ENCODE measurements at regions of chr4 and their contacts with region 1.

Region 1: DNA sequence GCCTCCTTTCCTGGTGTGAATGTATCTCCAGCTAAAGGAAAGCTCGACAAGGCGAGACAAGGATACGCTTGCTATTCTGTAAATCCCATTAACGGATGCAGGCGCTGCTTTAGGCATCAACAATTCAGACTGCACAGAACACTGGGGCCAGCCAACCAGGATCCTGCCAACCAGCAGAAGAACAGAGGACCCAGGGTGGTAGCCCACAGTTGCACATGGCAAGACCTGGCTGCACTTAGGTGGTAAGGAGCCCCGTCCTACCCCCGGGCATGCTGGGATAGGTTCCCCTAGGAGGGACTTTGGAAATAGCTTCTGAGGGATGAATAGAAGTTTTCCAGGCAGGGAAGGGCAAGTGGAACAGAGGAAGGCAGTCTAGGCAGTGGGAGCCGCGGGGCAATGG is 20.7 kb downstream of the PSAPL1 start:
- DNase-seq: peak in 1 of 2 experiments; percentile 37
- H3K4me3 ChIP-seq: no peak overlapping the region
- H3K27ac ChIP-seq: no peak overlapping the region
- H3K4me1 ChIP-seq: peaks cover 2 to 15% (median 12%) of the 10 kb centered on the region in 4 experiments; a peak in 4 of 7 replicates
- H3K27me3 ChIP-seq: peaks cover 37 to 71% (median 62%) of the 10 kb centered on the region in 4 experiments
- CTCF ChIP-seq: no peak
- EP300 ChIP-seq: no peak
- POLR2A ChIP-seq: no peak
- RAD21 ChIP-seq: no peak

Region 2: DNA sequence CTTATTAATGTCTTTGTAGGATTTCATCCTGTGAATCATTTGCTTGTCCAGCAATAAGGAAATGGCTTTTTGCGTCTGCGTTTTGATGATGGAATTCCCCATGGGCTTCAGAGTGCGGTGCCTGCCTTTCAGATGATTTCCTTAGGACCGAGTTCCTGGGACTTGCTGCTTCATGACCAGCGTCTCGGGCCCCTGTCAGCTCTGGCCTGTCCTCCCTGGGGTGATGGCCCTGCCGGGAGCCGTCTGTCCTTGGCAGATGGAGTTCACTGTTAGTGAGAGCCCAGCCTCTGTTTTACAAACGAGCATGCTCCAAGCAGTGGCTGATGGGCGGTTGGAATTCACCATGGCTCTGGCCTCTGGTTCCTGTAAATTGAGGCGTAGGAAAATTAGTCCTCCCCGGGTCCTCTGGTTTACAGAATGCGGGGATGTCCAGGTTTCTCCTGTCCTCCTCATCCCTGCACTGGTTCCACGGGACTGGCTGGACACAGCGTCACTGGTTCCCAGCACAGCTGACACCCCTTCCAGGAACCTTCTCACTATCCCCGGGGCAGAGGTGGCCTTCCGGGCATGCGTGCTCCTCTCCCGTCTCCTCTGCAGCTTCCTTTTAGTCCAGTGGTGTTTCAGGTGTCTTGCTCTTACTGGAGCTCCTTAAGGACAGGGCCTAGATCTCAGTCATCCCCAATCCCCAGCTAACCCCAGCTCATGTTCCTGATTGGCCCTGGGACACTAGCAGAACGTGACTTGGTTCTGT is 469.6 kb before region 1 on chr4:
- CTCF ChIA-PET with region 1: no interaction called
- POLR2A ChIA-PET with region 1: no interaction called
- DNase-seq: no peak
- H3K4me3 ChIP-seq: no peak overlapping the region
- H3K27ac ChIP-seq: peak overlapping the region; percentile 57
- H3K4me1 ChIP-seq: peaks cover 16 to 41% (median 26%) of the 10 kb centered on the region in 4 experiments
- H3K27me3 ChIP-seq: no peaks in the 10 kb centered on the region
- CTCF ChIP-seq: no peak
- EP300 ChIP-seq: no peak
- POLR2A ChIP-seq: no peak
- RAD21 ChIP-seq: no peak

Region 3: DNA sequence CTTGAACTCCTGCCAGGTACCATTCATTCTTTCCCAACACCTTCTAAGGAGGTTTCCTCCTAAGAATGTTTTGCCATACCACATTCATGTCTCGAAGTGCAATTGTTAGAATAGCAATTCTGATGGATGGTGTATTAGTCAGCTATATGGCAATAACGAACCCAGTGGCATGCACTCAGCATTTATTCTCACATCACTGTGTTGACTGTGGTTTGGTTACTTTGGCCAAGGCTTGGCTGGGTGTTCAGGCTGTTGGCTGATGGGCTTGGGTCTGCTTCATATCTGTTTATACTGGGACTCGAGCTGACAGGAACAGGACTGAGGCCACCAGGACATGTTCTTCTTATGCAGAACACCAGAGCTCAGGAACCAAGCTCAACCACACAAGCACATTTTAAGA is 11.0 kb before region 1 on chr4:
- CTCF ChIA-PET with region 1: interaction called, 14 read pairs
- POLR2A ChIA-PET with region 1: no interaction called
- DNase-seq: no peak
- H3K4me3 ChIP-seq: no peak overlapping the region
- H3K27ac ChIP-seq: no peak overlapping the region
- H3K4me1 ChIP-seq: no peaks in the 10 kb centered on the region
- H3K27me3 ChIP-seq: peaks cover 0 to 3% (median under 1%) of the 10 kb centered on the region in 4 experiments; a peak in 2 of 7 replicates
- CTCF ChIP-seq: no peak
- EP300 ChIP-seq: no peak
- POLR2A ChIP-seq: no peak
- RAD21 ChIP-seq: no peak

Region 4: DNA sequence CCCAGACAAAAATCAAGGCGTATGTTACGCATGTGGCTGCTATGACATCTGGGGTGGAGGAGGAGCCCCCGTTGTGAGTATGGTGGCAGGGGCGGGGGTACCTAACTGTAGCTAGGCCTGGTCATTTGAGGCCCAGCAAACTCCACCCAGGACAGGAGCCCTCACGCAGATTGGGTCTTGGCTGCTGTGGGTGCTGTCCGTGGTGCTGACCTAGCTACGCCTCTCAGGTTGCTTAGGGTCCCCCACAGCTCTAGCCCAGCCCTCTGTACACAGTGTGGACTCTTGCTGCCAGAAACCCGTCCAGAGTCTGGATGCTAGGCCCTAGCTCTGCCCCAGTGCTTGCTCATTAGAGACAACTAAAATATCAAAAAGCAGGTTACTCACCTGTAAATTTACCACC is 167.4 kb after region 1 on chr4:
- CTCF ChIA-PET with region 1: no interaction called
- POLR2A ChIA-PET with region 1: no interaction called
- DNase-seq: peak; percentile 17 to 71
- H3K4me3 ChIP-seq: no peak overlapping the region
- H3K27ac ChIP-seq: no peak overlapping the region
- H3K4me1 ChIP-seq: no peaks in the 10 kb centered on the region
- H3K27me3 ChIP-seq: no peaks in the 10 kb centered on the region
- CTCF ChIP-seq: no peak
- EP300 ChIP-seq: no peak
- POLR2A ChIP-seq: no peak
- RAD21 ChIP-seq: no peak